ENCODE measurements at regions of chr1 and their contacts with region 1.

Region 1: DNA sequence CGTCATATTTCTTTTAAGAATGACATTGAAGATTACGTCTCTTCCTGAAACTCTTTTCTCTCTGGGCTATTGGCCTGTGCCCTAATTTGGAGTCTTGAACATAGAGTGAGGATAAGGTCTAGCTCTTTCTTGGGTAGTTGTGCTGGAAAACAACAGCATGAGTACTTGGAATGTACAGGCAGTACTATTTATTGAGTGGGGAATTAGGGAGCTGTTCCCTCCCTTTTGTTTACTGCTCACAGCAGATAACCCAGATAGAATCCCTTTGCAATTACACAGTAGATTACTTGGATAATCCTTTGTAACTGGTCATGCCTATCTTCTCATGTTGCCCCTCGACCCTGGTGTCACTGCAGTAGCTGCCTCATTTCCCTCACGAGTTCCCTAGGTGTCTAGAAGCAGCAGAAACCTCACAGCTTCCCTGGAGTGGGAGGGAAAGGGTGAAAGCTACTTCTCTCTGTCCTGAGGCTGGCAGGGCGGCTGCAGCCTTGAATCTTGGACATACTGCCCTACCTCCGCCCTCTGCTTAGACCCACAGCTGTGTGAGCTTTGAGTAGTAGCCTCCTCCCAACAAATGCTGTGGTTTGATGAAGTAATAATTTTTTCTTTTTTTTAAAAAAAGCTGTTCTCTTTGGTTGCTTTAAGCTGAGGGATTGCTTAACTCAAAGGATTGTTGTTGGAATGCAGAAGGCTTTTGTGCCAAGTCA is 70.6 kb downstream of the FGGY start:
- DNase-seq: peak; percentile 74
- ATAC-seq: peak; percentile 98

Region 2: GRCh38 chr1:59173721-59174120 is 193.7 kb before region 1 on chr1:
- intact Hi-C with region 1: no loop called
- DNase-seq: no peak
- ATAC-seq: no peak

Region 3: GRCh38 chr1:59396387-59396786 is 28.9 kb after region 1 on chr1:
- intact Hi-C with region 1: loop called (anchors 2 kb)
- DNase-seq: no peak
- ATAC-seq: no peak